B cell (primary cell): ENCODE measurements at regions of chr10 and their contacts with region 1.

Region 1: DNA sequence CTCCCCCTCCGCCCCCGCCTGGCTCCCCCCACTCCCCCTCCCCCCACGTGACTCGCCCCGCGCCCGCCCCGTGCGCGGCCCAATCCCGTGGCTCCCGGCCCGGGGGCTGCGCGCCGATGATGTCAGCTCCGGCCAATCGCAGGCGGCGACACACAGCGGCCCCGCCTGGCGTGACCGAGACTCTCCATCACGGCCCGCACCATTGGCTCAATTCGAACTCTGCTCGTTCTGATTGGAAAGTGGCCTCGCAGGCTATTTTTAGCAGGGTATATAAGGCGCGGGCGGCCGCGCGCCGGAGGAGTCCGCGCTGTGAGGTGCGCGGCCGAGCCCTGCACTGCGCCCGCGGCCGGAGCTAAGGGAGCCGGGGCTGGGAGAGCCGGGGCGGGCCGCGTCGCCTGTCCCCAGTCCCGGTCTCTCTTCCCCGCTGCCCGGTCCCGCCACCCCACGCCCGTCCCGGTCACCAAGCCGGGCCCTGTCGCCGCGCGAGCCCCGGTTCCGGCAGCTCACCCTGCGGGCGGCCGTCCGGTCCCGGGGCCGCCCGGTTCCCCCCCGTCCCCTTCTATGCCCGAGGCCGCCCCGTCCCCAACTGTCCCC is 345 bp upstream of the KLF6 start:
- DNase-seq: peak; percentile 100
- ATAC-seq: peak; percentile 78
- H3K4me3 ChIP-seq: peak overlapping the region in 4 of 5 experiments; percentile 90 to 99 (median 98)
- H3K4me3 Mint-ChIP-seq: peak overlapping the region; percentile 96
- H3K27ac ChIP-seq: peak overlapping the region; percentile 99 to 100
- H3K27ac Mint-ChIP-seq: peak overlapping the region; percentile 96
- H3K4me1 ChIP-seq: peaks cover 30 to 33% of the 10 kb centered on the region in 2 donors
- H3K4me1 Mint-ChIP-seq: peaks cover 31% of the 10 kb centered on the region
- H3K27me3 ChIP-seq: no peaks in the 10 kb centered on the region
- H3K27me3 Mint-ChIP-seq: no peaks in the 10 kb centered on the region
- CTCF ChIP-seq: no peak

Region 2: GRCh38 chr10:3172446-3173170 is 612.7 kb before region 1 on chr10 and contains the start of gene PITRM1:
- CTCF ChIA-PET with region 1: no interaction called
- POLR2A ChIA-PET with region 1: interaction called, 3 read pairs
- intact Hi-C with region 1: loop called (anchors 10 kb)
- DNase-seq: peak; percentile 100
- ATAC-seq: peak; percentile 90
- H3K4me3 ChIP-seq: peak within 1 kb of the TSS; percentile 64 to 90 (median 77)
- H3K4me3 Mint-ChIP-seq: peak within 1 kb of the TSS; percentile 88
- H3K27ac ChIP-seq: peak within 1 kb of the TSS; percentile 68 to 92
- H3K27ac Mint-ChIP-seq: peak within 1 kb of the TSS; percentile 84
- H3K4me1 ChIP-seq: peaks cover 7 to 17% of the 10 kb centered on the region in 2 donors
- H3K4me1 Mint-ChIP-seq: peaks cover 16% of the 10 kb centered on the region
- H3K27me3 ChIP-seq: no peaks in the 10 kb centered on the region
- H3K27me3 Mint-ChIP-seq: no peaks in the 10 kb centered on the region
- CTCF ChIP-seq: no peak
- total RNA-seq, gene PITRM1: 65.3 and 71.1 TPM in 2 replicates

Region 3: GRCh38 chr10:3763035-3763456 is 22.3 kb before region 1 on chr10:
- CTCF ChIA-PET with region 1: interaction called, 10 read pairs
- POLR2A ChIA-PET with region 1: interaction called, 25 read pairs
- intact Hi-C with region 1: loop called (anchors 1 kb)
- DNase-seq: no peak
- ATAC-seq: no peak
- H3K4me3 ChIP-seq: no peak overlapping the region
- H3K4me3 Mint-ChIP-seq: peak overlapping the region; percentile 13
- H3K27ac ChIP-seq: no peak overlapping the region
- H3K27ac Mint-ChIP-seq: no peak overlapping the region
- H3K4me1 ChIP-seq: peaks cover 52 to 65% of the 10 kb centered on the region in 2 donors
- H3K4me1 Mint-ChIP-seq: peaks cover 74% of the 10 kb centered on the region
- H3K27me3 ChIP-seq: no peaks in the 10 kb centered on the region
- H3K27me3 Mint-ChIP-seq: no peaks in the 10 kb centered on the region
- CTCF ChIP-seq: no peak

Region 4: DNA sequence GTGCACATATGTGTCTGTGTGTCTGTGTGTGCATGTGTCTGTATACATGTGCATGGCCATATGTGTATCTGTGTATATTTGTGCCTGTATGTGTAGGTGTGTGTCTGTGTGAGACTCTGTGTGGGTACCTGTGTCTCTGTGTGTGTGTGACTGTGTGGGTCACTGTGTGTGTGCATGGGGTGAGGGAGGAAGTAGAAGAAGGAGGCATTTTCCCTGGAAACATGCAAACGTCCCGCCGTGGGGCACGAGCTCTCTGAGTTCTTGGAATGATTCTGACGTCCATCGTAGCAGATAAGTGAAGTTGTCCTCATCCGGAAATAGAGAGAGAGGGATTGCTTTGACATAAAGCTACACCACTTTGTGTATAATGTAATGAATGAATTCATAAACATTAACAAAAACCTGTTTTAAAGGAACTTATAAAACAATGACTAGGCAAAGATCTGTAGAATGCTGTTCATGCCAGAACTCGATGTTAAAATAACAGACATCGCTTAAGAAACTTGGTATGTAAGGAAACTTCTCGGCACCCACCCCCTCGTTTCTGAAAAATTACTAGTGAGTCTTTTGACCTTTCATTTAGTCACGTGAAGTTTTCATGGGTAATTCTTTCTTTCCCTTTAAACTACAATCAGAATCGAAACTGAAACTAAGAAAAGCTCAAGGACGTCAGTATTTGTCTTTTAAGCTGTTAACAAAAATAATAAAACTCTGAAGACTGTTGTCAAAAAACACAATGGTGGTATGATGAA is 43.2 kb after region 1 on chr10:
- CTCF ChIA-PET with region 1: no interaction called
- POLR2A ChIA-PET with region 1: interaction called, 7 read pairs
- intact Hi-C with region 1: loop called (anchors 2 kb)
- DNase-seq: peak; percentile 65
- ATAC-seq: peak; percentile 43
- H3K4me3 ChIP-seq: peak overlapping the region; percentile 39 to 66 (median 53)
- H3K4me3 Mint-ChIP-seq: peak overlapping the region; percentile 78
- H3K27ac ChIP-seq: peak overlapping the region; percentile 28 to 39
- H3K27ac Mint-ChIP-seq: peak overlapping the region; percentile 57
- H3K4me1 ChIP-seq: peaks cover 11 to 15% of the 10 kb centered on the region in 2 donors
- H3K4me1 Mint-ChIP-seq: peaks cover 20% of the 10 kb centered on the region
- H3K27me3 ChIP-seq: no peaks in the 10 kb centered on the region
- H3K27me3 Mint-ChIP-seq: no peaks in the 10 kb centered on the region
- CTCF ChIP-seq: no peak

Region 5: GRCh38 chr10:3902054-3902808 is 116.9 kb after region 1 on chr10:
- CTCF ChIA-PET with region 1: interaction called, 8 read pairs
- POLR2A ChIA-PET with region 1: interaction called, 20 read pairs
- intact Hi-C with region 1: loop called (anchors 1 kb)
- DNase-seq: peak; percentile 91
- ATAC-seq: peak; percentile 84
- H3K4me3 ChIP-seq: peak overlapping the region in 1 of 5 experiments; percentile 30
- H3K4me3 Mint-ChIP-seq: peak overlapping the region; percentile 57
- H3K27ac ChIP-seq: peak overlapping the region; percentile 94 to 99
- H3K27ac Mint-ChIP-seq: peak overlapping the region; percentile 94
- H3K4me1 ChIP-seq: peaks cover 50 to 64% of the 10 kb centered on the region in 2 donors
- H3K4me1 Mint-ChIP-seq: peaks cover 52% of the 10 kb centered on the region
- H3K27me3 ChIP-seq: no peaks in the 10 kb centered on the region
- H3K27me3 Mint-ChIP-seq: no peaks in the 10 kb centered on the region
- CTCF ChIP-seq: peak; percentile 24

Region 6: GRCh38 chr10:4333459-4333894 is 548.1 kb after region 1 on chr10:
- CTCF ChIA-PET with region 1: no interaction called
- POLR2A ChIA-PET with region 1: no interaction called
- intact Hi-C with region 1: loop called (anchors 2 kb)
- DNase-seq: no peak
- ATAC-seq: peak; percentile 46
- H3K4me3 ChIP-seq: no peak overlapping the region
- H3K4me3 Mint-ChIP-seq: no peak overlapping the region
- H3K27ac ChIP-seq: peak overlapping the region; percentile 84 to 96
- H3K27ac Mint-ChIP-seq: no peak overlapping the region
- H3K4me1 ChIP-seq: peaks cover 3% of the 10 kb centered on the region in 2 donors
- H3K4me1 Mint-ChIP-seq: no peaks in the 10 kb centered on the region
- H3K27me3 ChIP-seq: no peaks in the 10 kb centered on the region
- H3K27me3 Mint-ChIP-seq: no peaks in the 10 kb centered on the region
- CTCF ChIP-seq: peak; percentile 5